CD8-positive, alpha-beta T cell (primary cell): ENCODE measurements at regions of chr1 and their contacts with region 1.

Region 1: DNA sequence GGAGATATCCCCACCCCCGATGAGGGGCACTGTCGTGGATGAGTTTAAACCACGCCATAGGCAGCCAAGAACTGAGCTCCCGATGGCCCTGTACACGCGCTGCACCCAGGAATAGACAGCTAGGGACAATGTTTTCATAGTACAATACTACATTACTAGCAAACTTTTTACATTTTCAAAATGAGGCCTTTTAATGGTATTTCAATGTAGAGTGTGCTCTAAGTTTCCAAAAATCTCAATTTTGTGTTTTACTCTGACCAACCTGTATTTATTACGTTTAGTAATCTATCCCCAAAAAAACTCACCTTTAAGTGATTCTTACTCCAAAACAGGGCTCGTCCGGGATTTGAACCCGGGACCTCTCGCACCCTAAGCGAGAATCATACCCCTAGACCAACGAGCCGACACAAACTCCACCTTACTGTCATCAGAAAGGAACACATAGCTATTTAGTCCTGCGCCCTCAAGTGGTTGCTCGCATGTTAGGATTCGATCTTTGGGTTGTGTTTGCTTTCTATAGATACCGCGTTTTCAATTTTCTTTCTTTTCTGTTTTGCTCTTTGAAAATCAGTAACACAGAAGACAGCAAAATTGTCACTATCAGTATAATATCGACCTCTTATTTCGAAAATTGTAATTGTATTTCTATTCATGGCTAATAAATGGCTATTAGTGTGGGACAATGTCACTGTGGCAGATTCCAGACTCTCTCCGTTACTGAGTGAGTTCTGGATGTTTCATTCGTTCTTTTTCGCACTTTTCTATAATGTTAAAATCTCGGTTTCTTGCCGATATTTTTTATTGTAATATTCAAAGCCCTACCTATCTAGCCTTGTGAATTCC is 6.4 kb upstream of the MPZL1 start:
- DNase-seq: peak; percentile 78 to 95 (median 85)
- ATAC-seq: peak; percentile 59
- H3K4me3 ChIP-seq: peak overlapping the region; percentile 59 to 90
- H3K4me3 Mint-ChIP-seq: peak overlapping the region; percentile 98
- H3K27ac ChIP-seq: peak overlapping the region; percentile 23 to 24
- H3K27ac Mint-ChIP-seq: peak overlapping the region; percentile 92
- H3K4me1 ChIP-seq: peaks cover 13% of the 10 kb centered on the region
- H3K4me1 Mint-ChIP-seq: peaks cover 31% of the 10 kb centered on the region
- H3K27me3 ChIP-seq: no peaks in the 10 kb centered on the region
- H3K27me3 Mint-ChIP-seq: no peaks in the 10 kb centered on the region
- CTCF ChIP-seq: peak; percentile 86

Region 2: GRCh38 chr1:166875734-166876539 is 839.4 kb before region 1 on chr1 and contains the start of gene TADA1:
- CTCF ChIA-PET with region 1: no interaction called
- POLR2A ChIA-PET with region 1: no interaction called
- intact Hi-C with region 1: loop called in 1 of 2 experiments (anchors 10 kb)
- DNase-seq: peak; percentile 96 to 99 (median 98)
- ATAC-seq: peak; percentile 90
- H3K4me3 ChIP-seq: peak within 1 kb of the TSS; percentile 71 to 84
- H3K4me3 Mint-ChIP-seq: peak within 1 kb of the TSS; percentile 97
- H3K27ac ChIP-seq: peak within 1 kb of the TSS; percentile 74 to 79
- H3K27ac Mint-ChIP-seq: peak within 1 kb of the TSS; percentile 99
- H3K4me1 ChIP-seq: peaks cover 18% of the 10 kb centered on the region
- H3K4me1 Mint-ChIP-seq: peaks cover 49% of the 10 kb centered on the region
- H3K27me3 ChIP-seq: no peaks in the 10 kb centered on the region
- H3K27me3 Mint-ChIP-seq: no peaks in the 10 kb centered on the region
- CTCF ChIP-seq: no peak
- total RNA-seq, gene TADA1: 16.7 to 18.5 TPM

Region 3: GRCh38 chr1:167553136-167554027 is 162.0 kb before region 1 on chr1 and contains the start of gene CREG1:
- CTCF ChIA-PET with region 1: interaction called, 3 read pairs
- POLR2A ChIA-PET with region 1: no interaction called
- intact Hi-C with region 1: loop called in 1 of 2 experiments (anchors 1 kb)
- DNase-seq: peak; percentile 70 to 93 (median 88)
- ATAC-seq: peak; percentile 97
- H3K4me3 ChIP-seq: peak within 1 kb of the TSS; percentile 62 to 70
- H3K4me3 Mint-ChIP-seq: peak within 1 kb of the TSS; percentile 88
- H3K27ac ChIP-seq: peak within 1 kb of the TSS in 1 of 2 experiments; percentile 57
- H3K27ac Mint-ChIP-seq: no peak within 1 kb of the TSS
- H3K4me1 ChIP-seq: peaks cover 18% of the 10 kb centered on the region
- H3K4me1 Mint-ChIP-seq: peaks cover 47% of the 10 kb centered on the region
- H3K27me3 ChIP-seq: no peaks in the 10 kb centered on the region
- H3K27me3 Mint-ChIP-seq: no peaks in the 10 kb centered on the region
- CTCF ChIP-seq: no peak
- total RNA-seq, gene CREG1: 9.3 to 9.8 TPM

Region 4: DNA sequence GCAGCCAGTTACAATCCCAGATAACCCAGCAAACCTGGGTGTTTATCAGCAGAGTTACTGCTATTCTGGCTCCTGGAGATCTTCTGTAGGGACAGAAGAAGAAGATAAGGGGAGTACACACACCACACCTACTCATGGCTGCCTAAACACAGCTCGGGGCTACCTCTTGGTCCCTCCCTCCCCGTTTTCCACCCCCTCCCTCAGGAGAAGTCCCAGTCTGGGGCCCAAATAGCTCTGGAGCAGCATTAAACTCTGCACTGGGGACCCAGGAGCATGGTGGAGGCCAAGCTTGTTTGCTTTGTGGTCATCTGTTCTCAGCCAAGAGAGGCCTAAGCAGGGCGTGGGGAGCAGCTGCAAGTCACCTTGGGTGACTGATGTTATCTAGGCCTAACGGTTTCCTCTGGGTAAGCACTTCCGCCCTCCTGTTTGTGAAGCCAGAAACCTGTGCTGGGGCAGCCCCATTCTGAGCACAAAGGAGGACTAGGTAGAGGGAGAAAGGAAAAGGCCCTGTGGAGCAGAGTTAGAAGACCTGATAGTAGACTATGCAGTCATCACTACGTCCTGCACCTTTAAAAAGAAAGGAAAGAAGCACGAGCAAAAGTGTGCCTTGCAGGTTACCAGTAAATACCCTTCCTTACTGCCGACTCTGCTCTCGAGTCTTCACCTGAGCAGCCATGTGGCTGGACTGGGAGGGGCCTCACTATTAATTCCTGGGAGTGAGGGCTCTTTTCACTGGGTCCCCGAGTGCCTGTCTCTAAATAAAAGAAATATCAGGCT is 87.3 kb before region 1 on chr1:
- CTCF ChIA-PET with region 1: interaction called, 4 read pairs
- POLR2A ChIA-PET with region 1: interaction called, 9 read pairs
- intact Hi-C with region 1: loop called (anchors 2 kb)
- DNase-seq: peak; percentile 44 to 91 (median 73)
- ATAC-seq: peak; percentile 67
- H3K4me3 ChIP-seq: peak overlapping the region; percentile 28 to 96
- H3K4me3 Mint-ChIP-seq: peak overlapping the region; percentile 89
- H3K27ac ChIP-seq: peak overlapping the region; percentile 46 to 94
- H3K27ac Mint-ChIP-seq: peak overlapping the region; percentile 96
- H3K4me1 ChIP-seq: peaks cover 50% of the 10 kb centered on the region
- H3K4me1 Mint-ChIP-seq: peaks cover 63% of the 10 kb centered on the region
- H3K27me3 ChIP-seq: no peaks in the 10 kb centered on the region
- H3K27me3 Mint-ChIP-seq: no peaks in the 10 kb centered on the region
- CTCF ChIP-seq: no peak

Region 5: DNA sequence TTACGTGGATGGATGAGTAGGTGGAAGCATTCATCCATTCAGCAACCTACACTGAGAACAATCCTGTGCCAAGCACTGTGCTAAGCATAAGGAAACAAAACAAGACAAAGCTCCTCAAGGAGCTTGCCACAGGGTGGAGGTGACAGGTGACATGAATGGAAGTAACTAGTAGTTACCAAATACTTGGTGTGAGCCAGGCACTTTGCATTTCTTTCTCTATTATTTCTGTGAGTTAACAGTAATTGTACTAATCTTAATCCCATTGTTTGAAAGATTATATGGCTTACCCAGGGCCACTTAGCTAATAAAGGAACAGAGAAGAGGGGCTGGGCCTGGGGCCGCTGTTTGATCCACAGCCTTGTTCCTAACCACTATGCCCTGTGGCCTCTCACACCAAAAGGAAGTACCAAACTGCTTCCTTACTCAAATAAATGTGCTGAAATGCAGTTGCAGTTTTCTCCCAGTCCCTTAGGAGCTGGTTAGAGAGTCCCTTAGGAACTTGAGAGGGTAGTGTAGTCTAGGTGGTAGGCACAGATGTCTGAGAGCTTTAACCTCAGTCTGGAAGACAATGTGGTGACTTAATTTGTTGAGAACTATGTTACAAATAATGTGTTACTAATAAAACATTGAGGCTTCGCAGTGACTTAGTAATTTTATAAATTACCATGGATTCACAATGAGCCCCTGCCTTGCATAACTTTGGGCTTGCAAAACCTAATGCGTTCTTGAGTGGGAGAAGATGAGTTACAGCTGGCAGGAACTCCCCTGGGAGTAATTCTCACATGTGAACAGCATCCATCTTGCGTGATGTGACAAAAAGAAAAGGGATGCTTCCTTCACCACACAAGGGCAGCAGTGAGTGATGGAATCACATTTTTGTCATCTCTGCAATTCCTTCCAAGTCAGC is 76.2 kb after region 1 on chr1:
- CTCF ChIA-PET with region 1: no interaction called
- POLR2A ChIA-PET with region 1: no interaction called
- intact Hi-C with region 1: no loop called
- DNase-seq: peak in 1 of 9 experiments; percentile 15
- ATAC-seq: no peak
- H3K4me3 ChIP-seq: no peak overlapping the region
- H3K4me3 Mint-ChIP-seq: no peak overlapping the region
- H3K27ac ChIP-seq: no peak overlapping the region
- H3K27ac Mint-ChIP-seq: no peak overlapping the region
- H3K4me1 ChIP-seq: no peaks in the 10 kb centered on the region
- H3K4me1 Mint-ChIP-seq: no peaks in the 10 kb centered on the region
- H3K27me3 ChIP-seq: no peaks in the 10 kb centered on the region
- H3K27me3 Mint-ChIP-seq: no peaks in the 10 kb centered on the region
- CTCF ChIP-seq: no peak

Region 6: GRCh38 chr1:167936068-167936929 is 220.9 kb after region 1 on chr1 and contains the start of gene DCAF6:
- CTCF ChIA-PET with region 1: no interaction called
- POLR2A ChIA-PET with region 1: interaction called, 6 read pairs
- intact Hi-C with region 1: loop called (anchors 1 to 5 kb)
- DNase-seq: peak; percentile 93 to 100 (median 97)
- ATAC-seq: peak; percentile 78
- H3K4me3 ChIP-seq: peak within 1 kb of the TSS; percentile 85 to 86
- H3K4me3 Mint-ChIP-seq: peak within 1 kb of the TSS; percentile 89
- H3K27ac ChIP-seq: peak within 1 kb of the TSS; percentile 91 to 96
- H3K27ac Mint-ChIP-seq: peak within 1 kb of the TSS; percentile 93
- H3K4me1 ChIP-seq: peaks cover 29% of the 10 kb centered on the region
- H3K4me1 Mint-ChIP-seq: peaks cover 54% of the 10 kb centered on the region
- H3K27me3 ChIP-seq: no peaks in the 10 kb centered on the region
- H3K27me3 Mint-ChIP-seq: no peaks in the 10 kb centered on the region
- CTCF ChIP-seq: no peak
- total RNA-seq, gene DCAF6: 12.4 to 13.0 TPM

Region 7: GRCh38 chr1:169106095-169106920 is 1390.9 kb after region 1 on chr1 and contains the start of gene ATP1B1:
- CTCF ChIA-PET with region 1: no interaction called
- POLR2A ChIA-PET with region 1: no interaction called
- intact Hi-C with region 1: loop called in 1 of 2 experiments (anchors 5 kb)
- DNase-seq: peak; percentile 59 to 88 (median 78)
- ATAC-seq: peak; percentile 89
- H3K4me3 ChIP-seq: peak within 1 kb of the TSS; percentile 65 to 74
- H3K4me3 Mint-ChIP-seq: peak within 1 kb of the TSS; percentile 91
- H3K27ac ChIP-seq: no peak within 1 kb of the TSS
- H3K27ac Mint-ChIP-seq: peak within 1 kb of the TSS; percentile 23
- H3K4me1 ChIP-seq: peaks cover 24% of the 10 kb centered on the region
- H3K4me1 Mint-ChIP-seq: peaks cover 33% of the 10 kb centered on the region
- H3K27me3 ChIP-seq: peaks cover 0 to 2% of the 10 kb centered on the region in 2 experiments
- H3K27me3 Mint-ChIP-seq: peaks cover 4% of the 10 kb centered on the region
- CTCF ChIP-seq: peak; percentile 29
- total RNA-seq, gene ATP1B1: 2.6 to 3.0 TPM

Region 8: DNA sequence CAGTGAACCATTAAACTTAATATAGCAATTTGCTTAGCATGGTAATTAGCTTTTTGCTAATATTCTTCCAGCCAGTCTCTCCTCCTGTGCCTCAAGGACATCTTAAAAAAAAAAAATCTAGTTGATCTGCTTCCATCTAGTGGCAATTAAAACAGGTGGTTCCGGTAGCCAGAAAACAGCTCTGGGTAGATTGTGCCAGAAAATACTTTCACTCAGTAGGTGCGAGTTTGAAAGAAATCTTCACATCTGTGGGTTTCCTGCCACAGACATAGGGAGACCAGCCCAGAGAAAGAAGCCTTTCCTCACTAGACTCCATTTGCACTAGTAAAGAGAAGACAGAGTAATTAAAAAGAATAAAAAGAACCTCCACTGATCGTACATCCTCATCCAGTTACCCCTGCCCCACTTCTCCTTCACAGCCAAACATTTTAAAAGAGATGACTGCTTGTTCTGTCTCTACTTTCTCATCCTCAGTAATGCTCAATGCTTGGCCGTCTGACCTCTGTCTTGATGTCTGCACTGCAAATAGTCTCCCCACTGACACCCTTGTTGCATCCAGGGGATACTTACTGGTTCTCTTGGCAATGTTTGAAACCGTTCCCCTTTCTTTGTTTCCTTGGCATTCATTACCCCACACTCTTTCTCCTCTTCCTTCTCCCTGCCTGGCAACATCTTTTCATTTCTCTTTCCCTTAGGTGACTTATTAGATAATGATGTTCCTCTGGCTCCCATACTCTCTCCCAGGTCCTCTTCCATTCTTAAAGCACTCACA is 1979.1 kb after region 1 on chr1:
- CTCF ChIA-PET with region 1: no interaction called
- POLR2A ChIA-PET with region 1: no interaction called
- intact Hi-C with region 1: loop called in 1 of 2 experiments (anchors 10 kb)
- DNase-seq: peak in 7 of 9 experiments; percentile 19 to 88 (median 58)
- ATAC-seq: peak; percentile 59
- H3K4me3 ChIP-seq: no peak overlapping the region
- H3K4me3 Mint-ChIP-seq: peak overlapping the region; percentile 60
- H3K27ac ChIP-seq: peak overlapping the region; percentile 50 to 74
- H3K27ac Mint-ChIP-seq: no peak overlapping the region
- H3K4me1 ChIP-seq: peaks cover 96% of the 10 kb centered on the region
- H3K4me1 Mint-ChIP-seq: peaks cover 71% of the 10 kb centered on the region
- H3K27me3 ChIP-seq: no peaks in the 10 kb centered on the region
- H3K27me3 Mint-ChIP-seq: no peaks in the 10 kb centered on the region
- CTCF ChIP-seq: peak; percentile 50